Activated naive CD4-positive, alpha-beta T cell treated with anti-CD3 and anti-CD28 coated beads, Interleukin-2, amount 10 ng/mL, durations not matched to agents 7 days and 5 days (primary cell): ENCODE measurements at regions of chr4 and their contacts with region 1.

Region 1: DNA sequence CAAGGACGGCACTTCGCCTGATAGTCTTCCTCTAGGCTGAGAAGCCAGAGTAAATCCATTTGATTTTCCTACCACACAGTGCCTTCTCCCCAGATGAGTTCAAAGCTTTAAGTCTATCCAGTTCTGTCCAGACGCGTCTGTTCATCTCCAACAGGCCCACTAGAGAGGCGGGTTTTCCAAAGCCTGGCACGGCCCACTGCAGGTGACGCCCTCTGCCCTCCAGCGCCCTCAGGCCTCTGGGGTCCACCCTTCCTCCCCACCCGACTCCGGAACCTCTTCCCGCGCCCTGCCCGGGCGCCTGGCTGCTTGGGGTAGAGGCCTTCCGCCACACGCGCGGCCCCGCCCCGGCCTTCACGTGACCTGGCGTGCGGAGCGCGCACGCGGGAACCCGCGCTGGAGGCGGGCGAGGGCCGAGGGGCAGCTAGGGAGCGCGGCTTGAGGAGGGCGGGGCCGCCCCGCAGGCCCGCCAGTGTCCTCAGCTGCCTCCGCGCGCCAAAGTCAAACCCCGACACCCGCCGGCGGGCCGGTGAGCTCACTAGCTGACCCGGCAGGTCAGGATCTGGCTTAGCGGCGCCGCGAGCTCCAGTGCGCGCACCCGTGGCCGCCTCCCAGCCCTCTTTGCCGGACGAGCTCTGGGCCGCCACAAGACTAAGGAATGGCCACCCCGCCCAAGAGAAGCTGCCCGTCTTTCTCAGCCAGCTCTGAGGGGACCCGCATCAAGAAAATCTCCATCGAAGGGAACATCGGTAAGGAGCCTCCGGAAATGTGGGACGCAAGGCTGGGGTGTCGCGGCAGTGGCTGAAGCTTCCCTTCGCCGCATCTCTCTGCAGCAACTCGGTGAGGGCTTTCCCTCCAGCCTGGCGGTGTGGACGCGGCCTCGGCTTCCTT is at the start of gene DCK:
- DNase-seq: peak; percentile 87
- H3K4me3 Mint-ChIP-seq: peak within 1 kb of the TSS; percentile 93
- H3K27ac Mint-ChIP-seq: peak within 1 kb of the TSS; percentile 89
- H3K4me1 Mint-ChIP-seq: peaks cover 50% of the 10 kb centered on the region
- H3K27me3 Mint-ChIP-seq: no peaks in the 10 kb centered on the region

Region 2: DNA sequence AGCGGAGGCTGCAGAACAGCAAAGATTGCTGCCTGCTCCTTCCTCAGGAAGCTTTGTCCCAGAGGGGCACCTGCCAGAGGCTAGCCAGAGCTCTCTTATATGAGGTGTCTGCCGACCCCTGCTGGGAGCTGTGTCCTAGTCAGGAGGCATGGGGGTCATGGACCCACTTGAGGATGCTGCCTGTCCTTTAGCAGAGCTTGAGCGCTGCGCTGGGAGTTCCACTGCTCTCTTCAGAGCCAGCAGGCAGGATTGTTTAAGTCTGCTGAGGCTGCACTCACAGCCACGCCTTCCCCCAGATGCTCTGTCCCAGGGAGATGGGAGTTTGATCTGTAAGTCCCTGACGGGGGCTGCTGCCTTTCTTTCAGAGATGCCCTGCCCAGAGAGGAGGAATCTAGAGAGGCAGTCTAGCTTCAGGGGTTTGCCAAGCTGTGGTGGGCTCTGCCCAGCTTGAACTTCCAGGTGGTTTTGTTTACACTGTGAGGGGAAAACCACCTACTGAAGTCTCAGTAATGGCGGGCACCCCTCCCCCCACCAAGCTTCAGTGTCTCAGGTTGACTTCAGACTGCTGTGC is 10.9 kb after region 1 on chr4:
- CTCF ChIA-PET with region 1: interaction called, 24 read pairs
- DNase-seq: peak; percentile 70
- H3K4me3 Mint-ChIP-seq: peak overlapping the region; percentile 46
- H3K27ac Mint-ChIP-seq: peak overlapping the region; percentile 91
- H3K4me1 Mint-ChIP-seq: peaks cover 90% of the 10 kb centered on the region
- H3K27me3 Mint-ChIP-seq: no peaks in the 10 kb centered on the region

Region 3: GRCh38 chr4:71009890-71010588 is 16.6 kb after region 1 on chr4:
- CTCF ChIA-PET with region 1: interaction called, 24 read pairs
- DNase-seq: no peak
- H3K4me3 Mint-ChIP-seq: no peak overlapping the region
- H3K27ac Mint-ChIP-seq: peak overlapping the region; percentile 38
- H3K4me1 Mint-ChIP-seq: peaks cover 45% of the 10 kb centered on the region
- H3K27me3 Mint-ChIP-seq: no peaks in the 10 kb centered on the region